Natural killer cell (primary cell): ENCODE measurements at regions of chrX and their contacts with region 1.

Region 1: DNA sequence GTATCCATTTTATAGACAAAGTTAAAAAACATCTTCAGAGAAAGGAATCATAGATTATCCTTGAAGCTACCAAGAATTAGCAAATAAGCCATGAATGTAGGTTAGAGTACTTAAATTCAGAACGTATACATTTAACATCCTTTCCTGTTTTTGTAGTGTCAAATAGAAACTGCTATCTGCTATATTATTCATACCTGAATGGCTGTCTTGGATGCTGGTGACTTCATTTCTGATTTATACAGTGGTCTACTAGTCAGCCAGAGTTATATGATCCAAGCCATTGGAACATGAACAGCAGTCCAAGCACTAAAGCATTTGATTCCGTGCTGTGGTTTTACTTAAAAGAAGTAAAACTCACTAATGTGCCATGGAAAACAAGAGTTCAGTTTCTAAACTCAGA is 58.3 kb upstream of the VSIG4 start:
- DNase-seq: no peak
- ATAC-seq: no peak
- H3K4me3 ChIP-seq: no peak overlapping the region
- H3K4me3 Mint-ChIP-seq: no peak overlapping the region
- H3K27ac ChIP-seq: no peak overlapping the region
- H3K27ac Mint-ChIP-seq: no peak overlapping the region
- H3K4me1 ChIP-seq: no peaks in the 10 kb centered on the region
- H3K4me1 Mint-ChIP-seq: no peaks in the 10 kb centered on the region
- H3K27me3 ChIP-seq: no peaks in the 10 kb centered on the region
- H3K27me3 Mint-ChIP-seq: peaks cover 0 to 15% of the 10 kb centered on the region in 2 donors
- CTCF ChIP-seq: no peak

Region 2: GRCh38 chrX:66030505-66031317 is 67.5 kb before region 1 on chrX:
- intact Hi-C with region 1: loop called (anchors 10 kb)
- DNase-seq: peak in 1 of 2 donors; percentile 64
- ATAC-seq: peak in 2 of 3 donors; percentile 78 to 86
- H3K4me3 ChIP-seq: no peak overlapping the region
- H3K4me3 Mint-ChIP-seq: no peak overlapping the region
- H3K27ac ChIP-seq: no peak overlapping the region
- H3K27ac Mint-ChIP-seq: no peak overlapping the region
- H3K4me1 ChIP-seq: peaks cover 12% of the 10 kb centered on the region
- H3K4me1 Mint-ChIP-seq: no peaks in the 10 kb centered on the region
- H3K27me3 ChIP-seq: no peaks in the 10 kb centered on the region
- H3K27me3 Mint-ChIP-seq: no peaks in the 10 kb centered on the region
- CTCF ChIP-seq: peak; percentile 54